ENCODE measurements at regions of chr6 and their contacts with region 1.

Region 1: GRCh38 chr6:30828027-30828960 is 56.0 kb upstream of the DDR1 start:
- DNase-seq: peak; percentile 62 to 83 (median 67)
- H3K4me3 ChIP-seq: peak overlapping the region; percentile 73
- H3K4me3 Mint-ChIP-seq: peak overlapping the region; percentile 89 to 94 (median 93)
- H3K27ac ChIP-seq: peak overlapping the region; percentile 76
- H3K27ac Mint-ChIP-seq: peak overlapping the region; percentile 37 to 100 (median 95)
- H3K4me1 ChIP-seq: peaks cover 44% of the 10 kb centered on the region
- H3K4me1 Mint-ChIP-seq: peaks cover 69 to 90% (median 79%) of the 10 kb centered on the region in 3 donors
- H3K27me3 ChIP-seq: no peaks in the 10 kb centered on the region
- H3K27me3 Mint-ChIP-seq: peaks cover 0 to 4% of the 10 kb centered on the region in 2 donors

Region 2: GRCh38 chr6:30844091-30844535 is 15.8 kb after region 1 on chr6:
- CTCF ChIA-PET with region 1: interaction called, 21 read pairs
- POLR2A ChIA-PET with region 1: interaction called, 5 read pairs
- DNase-seq: no peak
- H3K4me3 ChIP-seq: no peak overlapping the region
- H3K4me3 Mint-ChIP-seq: no peak overlapping the region
- H3K27ac ChIP-seq: no peak overlapping the region
- H3K27ac Mint-ChIP-seq: no peak overlapping the region
- H3K4me1 ChIP-seq: peaks cover 7% of the 10 kb centered on the region
- H3K4me1 Mint-ChIP-seq: peaks cover 5 to 26% (median 13%) of the 10 kb centered on the region in 3 donors
- H3K27me3 ChIP-seq: no peaks in the 10 kb centered on the region
- H3K27me3 Mint-ChIP-seq: peaks cover 8 to 12% of the 10 kb centered on the region in 2 donors

Region 3: DNA sequence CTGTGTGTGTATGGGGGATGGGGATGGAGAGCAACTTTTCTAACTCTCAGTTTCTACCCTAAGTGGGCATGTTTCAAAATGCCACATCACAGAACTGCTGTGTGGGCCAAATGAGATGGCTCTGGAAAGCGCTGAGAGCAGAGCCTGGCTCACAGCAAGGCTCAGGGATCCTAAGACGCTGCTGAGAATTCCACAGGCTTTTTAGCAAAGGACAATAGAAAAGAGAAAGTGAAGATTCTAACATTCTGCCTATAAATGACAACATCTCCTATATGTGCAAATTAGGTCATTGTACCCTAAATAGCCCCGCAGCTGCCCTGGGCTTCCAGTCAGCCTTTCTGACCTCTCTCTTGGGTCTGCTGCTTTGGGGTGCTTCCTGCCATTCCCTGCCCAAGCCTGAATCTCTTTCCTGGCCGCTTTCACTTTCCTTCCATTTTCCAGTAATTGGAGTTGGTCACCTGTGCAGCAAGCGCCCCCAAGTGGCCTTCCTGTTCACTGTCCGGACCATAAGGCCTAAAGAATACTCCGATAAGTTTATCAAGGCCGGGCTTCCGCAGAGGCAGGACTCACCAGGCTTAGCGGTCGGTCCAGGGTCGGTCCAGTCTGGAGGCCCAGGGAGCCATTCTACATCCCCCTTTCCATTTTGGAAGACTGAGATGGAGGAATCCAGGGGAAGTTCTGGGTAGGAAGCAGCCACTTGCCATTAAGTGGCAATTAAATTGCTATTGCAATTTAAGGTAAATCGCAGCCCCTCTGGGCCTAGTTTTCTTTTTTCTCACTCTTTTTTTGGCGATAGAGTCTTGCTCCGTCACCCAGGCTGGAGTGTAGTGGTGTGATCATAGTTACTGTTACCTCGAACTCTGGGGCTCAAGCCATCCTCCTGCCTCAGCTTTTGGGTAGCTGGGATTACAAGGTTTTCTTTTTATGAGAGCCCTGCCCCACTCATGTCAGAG is 49.4 kb after region 1 on chr6:
- CTCF ChIA-PET with region 1: interaction called, 148 read pairs
- POLR2A ChIA-PET with region 1: no interaction called
- DNase-seq: peak; percentile 59 to 84 (median 65)
- H3K4me3 ChIP-seq: peak overlapping the region; percentile 46
- H3K4me3 Mint-ChIP-seq: peak overlapping the region; percentile 77 to 97 (median 83)
- H3K27ac ChIP-seq: peak overlapping the region; percentile 76
- H3K27ac Mint-ChIP-seq: peak overlapping the region; percentile 10 to 96 (median 81)
- H3K4me1 ChIP-seq: peaks cover 14% of the 10 kb centered on the region
- H3K4me1 Mint-ChIP-seq: peaks cover 9 to 17% (median 9%) of the 10 kb centered on the region in 3 donors
- H3K27me3 ChIP-seq: no peaks in the 10 kb centered on the region
- H3K27me3 Mint-ChIP-seq: peaks cover 0 to 4% of the 10 kb centered on the region in 2 donors

Region 4: DNA sequence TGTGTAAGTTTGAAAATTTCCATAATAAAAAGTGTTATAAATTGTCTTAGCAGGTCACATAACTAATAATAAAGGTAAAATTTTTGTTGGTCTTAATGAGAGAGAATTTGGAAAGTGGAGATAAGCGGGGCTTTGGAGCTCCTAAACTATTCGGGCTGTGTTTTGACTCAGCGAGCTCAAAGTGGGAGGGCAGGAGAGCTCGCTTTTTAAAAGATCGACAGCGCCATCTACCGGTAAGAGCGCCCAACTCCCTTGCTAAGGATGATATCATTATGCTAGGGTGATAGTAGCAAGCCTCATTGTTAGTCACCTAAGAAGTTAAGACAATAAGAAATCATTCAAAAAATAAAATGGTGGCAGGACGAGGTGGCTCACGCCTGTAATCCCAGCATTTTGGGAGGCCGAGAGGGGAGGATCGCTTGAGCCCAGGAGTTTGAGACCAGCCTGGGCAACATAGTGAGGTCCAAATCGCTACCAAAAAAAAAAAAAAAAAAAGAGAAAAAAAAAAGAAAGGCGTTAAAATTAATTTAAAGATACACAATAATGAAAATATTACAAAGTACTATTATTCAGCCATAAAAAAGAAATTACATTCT is 259.3 kb after region 1 on chr6:
- CTCF ChIA-PET with region 1: interaction called, 15 read pairs
- POLR2A ChIA-PET with region 1: interaction called, 3 read pairs
- DNase-seq: peak; percentile 72 to 90 (median 81)
- H3K4me3 ChIP-seq: no peak overlapping the region
- H3K4me3 Mint-ChIP-seq: no peak overlapping the region
- H3K27ac ChIP-seq: no peak overlapping the region
- H3K27ac Mint-ChIP-seq: no peak overlapping the region
- H3K4me1 ChIP-seq: peaks cover 5% of the 10 kb centered on the region
- H3K4me1 Mint-ChIP-seq: peaks cover 0 to 4% (median 2%) of the 10 kb centered on the region in 3 donors
- H3K27me3 ChIP-seq: no peaks in the 10 kb centered on the region
- H3K27me3 Mint-ChIP-seq: peaks cover 2 to 14% of the 10 kb centered on the region in 2 donors

Measured in CD8-positive, alpha-beta memory T cell (primary cell).